Caco-2 (cell line): ENCODE measurements at regions of chr1 and their contacts with region 1.

Region 1: GRCh38 chr1:111755331-111756123 is at the start of gene DDX20:
- DNase-seq: peak; percentile 86 to 90
- H3K4me3 ChIP-seq: peak within 1 kb of the TSS; percentile 79
- H3K4me3 Mint-ChIP-seq: peak within 1 kb of the TSS; percentile 92
- H3K27ac Mint-ChIP-seq: peak within 1 kb of the TSS; percentile 88
- H3K4me1 ChIP-seq: peaks cover 5% of the 10 kb centered on the region; the same call in 1 of the 2 replicates
- H3K4me1 Mint-ChIP-seq: peaks cover 12% of the 10 kb centered on the region
- H3K27me3 ChIP-seq: no peaks in the 10 kb centered on the region
- H3K27me3 Mint-ChIP-seq: no peaks in the 10 kb centered on the region
- CTCF ChIP-seq: peak; percentile 56 to 80
- total RNA-seq, gene DDX20: 10.4 and 11.6 TPM in 2 replicates

Region 2: GRCh38 chr1:111605576-111605975 is 150.0 kb before region 1 on chr1:
- CTCF ChIA-PET with region 1: no interaction called
- POLR2A ChIA-PET with region 1: no interaction called
- intact Hi-C with region 1: no loop called
- DNase-seq: no peak
- H3K4me3 ChIP-seq: no peak overlapping the region
- H3K4me3 Mint-ChIP-seq: no peak overlapping the region
- H3K27ac Mint-ChIP-seq: no peak overlapping the region
- H3K4me1 ChIP-seq: no peaks in the 10 kb centered on the region
- H3K4me1 Mint-ChIP-seq: no peaks in the 10 kb centered on the region
- H3K27me3 ChIP-seq: no peaks in the 10 kb centered on the region
- H3K27me3 Mint-ChIP-seq: no peaks in the 10 kb centered on the region
- CTCF ChIP-seq: no peak

Region 3: DNA sequence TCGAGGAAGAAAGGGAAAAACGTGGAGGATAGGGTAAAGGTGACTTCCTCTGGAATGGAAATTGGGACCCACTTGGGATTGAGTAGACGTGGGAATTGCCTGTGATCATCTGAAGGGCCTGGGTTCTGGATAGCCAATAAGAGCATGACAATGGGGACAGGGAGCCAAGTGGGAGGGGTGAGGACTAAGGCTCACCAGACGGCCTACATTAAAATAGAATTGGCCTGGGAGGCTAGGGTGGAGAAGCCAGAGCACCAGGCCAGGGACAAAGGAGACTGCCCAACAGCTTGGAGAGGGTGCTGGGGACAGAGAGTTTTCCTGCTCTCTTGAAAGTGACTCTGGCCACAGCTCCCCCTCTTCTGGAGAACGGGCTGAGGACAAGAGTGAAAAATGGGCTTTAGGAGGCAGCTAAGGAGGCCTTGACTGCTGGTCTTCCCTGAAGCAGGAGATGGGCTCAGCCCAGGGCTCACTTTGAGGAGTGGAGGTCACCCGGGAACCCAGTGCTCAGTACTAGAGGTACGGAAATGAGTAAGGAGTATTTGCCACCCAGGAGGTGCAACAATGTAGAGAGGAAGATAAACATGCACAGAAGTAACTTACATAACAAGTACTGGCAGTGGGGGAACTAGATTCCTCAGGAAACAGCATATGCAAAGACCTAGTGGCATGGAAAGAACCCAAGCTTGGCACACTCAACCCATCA is 35.1 kb before region 1 on chr1:
- CTCF ChIA-PET with region 1: no interaction called
- POLR2A ChIA-PET with region 1: no interaction called
- intact Hi-C with region 1: loop called (anchors 2 kb)
- DNase-seq: no peak
- H3K4me3 ChIP-seq: no peak overlapping the region
- H3K4me3 Mint-ChIP-seq: no peak overlapping the region
- H3K27ac Mint-ChIP-seq: peak overlapping the region; percentile 60
- H3K4me1 ChIP-seq: no peaks in the 10 kb centered on the region
- H3K4me1 Mint-ChIP-seq: peaks cover 18% of the 10 kb centered on the region
- H3K27me3 ChIP-seq: no peaks in the 10 kb centered on the region
- H3K27me3 Mint-ChIP-seq: no peaks in the 10 kb centered on the region
- CTCF ChIP-seq: no peak

Region 4: DNA sequence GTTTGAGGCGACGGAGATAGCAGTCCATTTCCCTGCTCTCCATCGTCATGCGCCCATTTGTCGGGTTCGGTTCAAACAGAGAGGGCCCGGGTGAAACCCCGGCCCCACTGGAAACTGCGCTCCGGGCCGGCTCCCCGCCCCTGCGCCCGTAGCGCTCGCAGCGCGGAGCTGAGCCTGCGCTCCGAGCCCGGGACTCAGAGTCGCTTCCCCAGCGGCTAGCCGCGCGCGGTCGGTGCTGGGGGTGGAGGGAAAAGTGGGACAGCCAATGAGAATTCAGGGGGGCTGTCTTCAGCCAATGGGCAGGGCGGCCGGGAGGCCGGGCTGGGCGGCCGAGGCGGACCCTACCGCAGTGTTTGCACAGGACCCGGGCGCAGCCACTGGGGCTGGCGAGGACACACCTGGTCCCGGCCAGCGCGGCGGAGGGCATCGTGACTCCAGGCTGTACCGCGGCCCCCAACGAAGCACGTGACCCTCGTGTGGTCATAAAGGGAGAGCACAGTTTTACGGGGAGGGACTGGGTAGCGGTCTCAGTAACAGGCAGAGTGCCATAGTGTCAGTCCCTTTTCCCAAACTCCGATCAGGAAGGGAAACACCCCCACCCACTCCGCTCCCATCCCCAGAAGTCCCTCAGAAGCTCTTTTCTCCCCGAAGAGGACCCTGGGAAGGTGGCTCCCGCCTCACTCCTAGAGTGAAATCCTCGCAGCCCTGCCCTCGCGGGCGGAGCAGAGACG is 16.2 kb before region 1 on chr1 and contains the start of gene INKA2:
- CTCF ChIA-PET with region 1: interaction called, 3 read pairs
- POLR2A ChIA-PET with region 1: no interaction called
- intact Hi-C with region 1: loop called (anchors 1 kb)
- DNase-seq: peak; percentile 90 to 91
- H3K4me3 ChIP-seq: peak within 1 kb of the TSS; percentile 56
- H3K4me3 Mint-ChIP-seq: peak within 1 kb of the TSS; percentile 79
- H3K27ac Mint-ChIP-seq: peak within 1 kb of the TSS; percentile 92
- H3K4me1 ChIP-seq: peaks cover 4% of the 10 kb centered on the region; the same call in 1 of the 2 replicates
- H3K4me1 Mint-ChIP-seq: peaks cover 16% of the 10 kb centered on the region
- H3K27me3 ChIP-seq: no peaks in the 10 kb centered on the region
- H3K27me3 Mint-ChIP-seq: no peaks in the 10 kb centered on the region
- CTCF ChIP-seq: no peak
- total RNA-seq, gene INKA2: 5.8 and 8.5 TPM in 2 replicates